Activated CD4-positive, alpha-beta T cell treated with anti-CD3 and anti-CD28 coated beads for 36 hours (primary cell): ENCODE measurements at regions of chr5 and their contacts with region 1.

Region 1: DNA sequence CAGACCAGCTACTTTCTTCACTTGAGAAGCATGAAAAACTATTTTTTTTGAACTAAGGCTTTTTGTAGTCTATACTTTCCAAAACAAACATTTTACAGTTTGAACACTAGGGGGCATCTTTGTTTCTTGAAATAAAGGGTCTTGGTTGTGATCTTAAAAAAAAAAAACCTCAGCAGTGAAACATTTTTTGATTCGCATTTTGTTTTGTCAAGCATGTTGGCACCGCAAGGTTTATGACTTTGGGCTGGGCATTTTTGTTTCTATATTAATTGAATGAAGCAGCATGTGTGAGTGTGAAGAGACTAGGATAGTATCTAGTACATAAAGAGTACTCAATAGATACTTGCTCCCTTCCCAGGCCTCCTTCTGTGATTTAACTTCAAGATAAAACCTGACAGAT is 31.6 kb upstream of the ACOT12 start:
- DNase-seq: no peak
- ATAC-seq: peak; percentile 70
- H3K4me3 Mint-ChIP-seq: no peak overlapping the region
- H3K27ac Mint-ChIP-seq: no peak overlapping the region
- H3K4me1 Mint-ChIP-seq: peaks cover 30% of the 10 kb centered on the region
- H3K27me3 Mint-ChIP-seq: no peaks in the 10 kb centered on the region

Region 2: GRCh38 chr5:81838307-81838906 is 412.8 kb after region 1 on chr5:
- CTCF ChIA-PET with region 1: interaction called, 4 read pairs
- POLR2A ChIA-PET with region 1: interaction called, 3 read pairs
- intact Hi-C with region 1: loop called in 1 of 2 experiments (anchors 5 kb)
- DNase-seq: peak; percentile 35
- ATAC-seq: peak; percentile 79
- H3K4me3 Mint-ChIP-seq: no peak overlapping the region
- H3K27ac Mint-ChIP-seq: no peak overlapping the region
- H3K4me1 Mint-ChIP-seq: peaks cover 7% of the 10 kb centered on the region
- H3K27me3 Mint-ChIP-seq: no peaks in the 10 kb centered on the region

Region 3: GRCh38 chr5:82165740-82166530 is 740.4 kb after region 1 on chr5:
- CTCF ChIA-PET with region 1: interaction called, 19 read pairs
- POLR2A ChIA-PET with region 1: no interaction called
- intact Hi-C with region 1: loop called (anchors 1 to 2 kb)
- DNase-seq: peak; percentile 53
- ATAC-seq: peak; percentile 99
- H3K4me3 Mint-ChIP-seq: no peak overlapping the region
- H3K27ac Mint-ChIP-seq: no peak overlapping the region
- H3K4me1 Mint-ChIP-seq: peaks cover 14% of the 10 kb centered on the region
- H3K27me3 Mint-ChIP-seq: no peaks in the 10 kb centered on the region

Region 4: GRCh38 chr5:82225525-82226172 is 800.1 kb after region 1 on chr5:
- CTCF ChIA-PET with region 1: interaction called, 7 read pairs
- POLR2A ChIA-PET with region 1: no interaction called
- intact Hi-C with region 1: loop called (anchors 1 kb)
- DNase-seq: peak; percentile 75
- ATAC-seq: peak; percentile 93
- H3K4me3 Mint-ChIP-seq: no peak overlapping the region
- H3K27ac Mint-ChIP-seq: no peak overlapping the region
- H3K4me1 Mint-ChIP-seq: no peaks in the 10 kb centered on the region
- H3K27me3 Mint-ChIP-seq: no peaks in the 10 kb centered on the region